Calu3 (cell line): ENCODE measurements at regions of chr6 and their contacts with region 1.

Region 1: DNA sequence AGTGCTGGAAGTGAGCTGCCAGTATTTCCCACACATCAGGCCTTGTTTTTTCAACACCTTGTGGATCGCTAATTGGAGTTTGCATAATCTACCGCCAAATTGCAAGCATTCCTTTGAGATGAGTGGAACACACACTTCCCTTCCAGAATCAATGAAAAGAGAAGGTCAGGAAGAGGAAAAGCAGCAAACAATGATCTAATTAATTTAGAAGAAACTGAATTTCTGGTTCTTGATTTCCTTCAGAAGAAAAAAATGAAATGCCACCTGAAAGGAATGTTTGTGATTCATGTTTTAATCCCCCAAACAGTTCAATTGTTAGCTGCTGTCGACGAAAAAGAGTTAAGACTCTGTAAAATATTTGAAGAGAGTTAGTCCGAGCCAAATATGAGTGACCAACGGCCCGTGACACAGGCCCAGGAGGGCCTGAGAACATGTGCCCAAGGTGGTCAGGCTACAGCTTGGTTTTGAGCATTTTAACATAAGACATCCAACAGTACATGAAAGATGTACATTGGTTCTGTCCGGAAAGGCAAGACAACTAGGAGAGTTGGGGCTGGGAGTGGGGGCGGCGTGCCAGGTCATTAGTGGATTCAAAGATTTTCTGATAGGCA is 182.3 kb downstream of the MTFR2 start:
- DNase-seq: peak; percentile 61
- H3K4me3 Mint-ChIP-seq: peak overlapping the region; percentile 66
- H3K27ac Mint-ChIP-seq: peak overlapping the region; percentile 100
- H3K4me1 Mint-ChIP-seq: peaks cover 37% of the 10 kb centered on the region
- H3K27me3 Mint-ChIP-seq: no peaks in the 10 kb centered on the region
- CTCF ChIP-seq: no peak

Region 2: GRCh38 chr6:136031982-136032381 is 35.9 kb before region 1 on chr6:
- CTCF ChIA-PET with region 1: interaction called, 8 read pairs
- intact Hi-C with region 1: loop called (anchors 2 kb)
- DNase-seq: peak; percentile 33
- H3K4me3 Mint-ChIP-seq: no peak overlapping the region
- H3K27ac Mint-ChIP-seq: no peak overlapping the region
- H3K4me1 Mint-ChIP-seq: peaks cover 9% of the 10 kb centered on the region
- H3K27me3 Mint-ChIP-seq: no peaks in the 10 kb centered on the region
- CTCF ChIP-seq: no peak

Region 3: DNA sequence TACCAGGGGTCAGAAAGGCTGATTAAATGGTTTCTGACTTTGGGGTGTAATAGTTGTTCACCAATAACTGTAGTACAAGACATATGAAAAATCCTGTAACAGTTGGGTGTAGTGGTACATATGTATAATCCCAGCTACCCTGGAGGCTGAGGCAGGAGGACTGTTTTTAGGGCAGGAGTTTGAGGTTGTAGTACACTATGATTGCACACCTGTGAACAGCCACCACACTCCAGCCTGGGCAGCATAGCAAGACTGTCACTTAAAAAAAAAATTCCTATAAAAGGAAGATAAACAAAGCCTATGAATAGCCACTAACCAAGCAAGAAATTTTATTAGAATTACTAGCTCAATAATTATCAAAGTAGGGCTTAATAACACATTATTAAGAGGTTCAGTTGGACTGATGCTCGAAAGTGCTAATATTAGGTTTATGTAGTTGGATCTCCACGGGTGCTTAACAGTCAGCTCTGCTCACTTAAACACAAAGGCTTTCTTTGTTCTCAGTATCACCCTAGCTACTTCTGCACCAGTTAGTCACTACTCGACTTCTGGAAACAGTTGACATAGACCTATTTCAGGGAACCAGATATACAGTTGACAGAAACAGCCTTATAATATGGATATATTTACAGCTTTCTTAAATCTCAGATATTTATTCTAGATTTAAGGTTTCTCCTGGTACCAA is 69.3 kb after region 1 on chr6:
- CTCF ChIA-PET with region 1: no interaction called
- intact Hi-C with region 1: loop called (anchors 2 kb)
- DNase-seq: peak; percentile 7
- H3K4me3 Mint-ChIP-seq: no peak overlapping the region
- H3K27ac Mint-ChIP-seq: no peak overlapping the region
- H3K4me1 Mint-ChIP-seq: peaks cover 8% of the 10 kb centered on the region
- H3K27me3 Mint-ChIP-seq: no peaks in the 10 kb centered on the region
- CTCF ChIP-seq: no peak